Esophagus muscularis mucosa (tissue), 4 donors: ENCODE measurements at regions of chr5 and their contacts with region 1.

Region 1: GRCh38 chr5:40904205-40904993 is 4.9 kb upstream of the C7 start:
- DNase-seq: no peak
- H3K4me3 ChIP-seq: no peak overlapping the region
- H3K27ac ChIP-seq: peak overlapping the region in 1 of 4 donors; percentile 45
- H3K4me1 ChIP-seq: peaks cover 0 to 12% (median 5%) of the 10 kb centered on the region in 4 donors
- H3K27me3 ChIP-seq: no peaks in the 10 kb centered on the region
- CTCF ChIP-seq: peak; percentile 60 to 86 (median 69)
- EP300 ChIP-seq: no peak
- POLR2A ChIP-seq: no peak

Region 2: GRCh38 chr5:40853632-40854192 is 50.7 kb before region 1 on chr5:
- intact Hi-C with region 1: no loop called
- DNase-seq: no peak
- H3K4me3 ChIP-seq: no peak overlapping the region
- H3K27ac ChIP-seq: no peak overlapping the region
- H3K4me1 ChIP-seq: no peaks in the 10 kb centered on the region
- H3K27me3 ChIP-seq: no peaks in the 10 kb centered on the region
- CTCF ChIP-seq: no peak
- EP300 ChIP-seq: no peak
- POLR2A ChIP-seq: no peak

Region 3: DNA sequence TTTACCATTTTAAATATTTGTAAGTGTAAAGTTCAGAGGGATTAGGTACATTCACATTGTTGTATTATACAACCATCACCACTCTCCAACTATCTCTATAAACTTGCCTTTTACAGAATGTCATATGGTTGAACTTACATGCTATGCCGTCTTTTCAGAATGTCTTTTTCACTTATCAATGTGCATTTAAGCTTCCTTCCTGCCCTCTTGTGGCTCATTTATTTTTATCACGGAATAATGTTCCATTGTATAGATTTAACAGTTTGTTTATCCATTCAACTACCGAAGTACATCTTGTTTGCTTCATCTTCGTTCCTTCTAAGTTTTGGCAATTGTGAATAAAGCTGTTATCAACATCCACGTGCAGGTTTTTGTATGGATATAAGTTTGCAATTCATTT is 442.2 kb after region 1 on chr5:
- intact Hi-C with region 1: loop called (anchors 10 kb)
- DNase-seq: no peak
- H3K4me3 ChIP-seq: no peak overlapping the region
- H3K27ac ChIP-seq: no peak overlapping the region
- H3K4me1 ChIP-seq: peaks cover 0 to 21% (median 0%) of the 10 kb centered on the region in 4 donors
- H3K27me3 ChIP-seq: no peaks in the 10 kb centered on the region
- CTCF ChIP-seq: no peak
- EP300 ChIP-seq: no peak
- POLR2A ChIP-seq: no peak